Heart left ventricle (tissue), 16 donors: ENCODE measurements at regions of chr18 and their contacts with region 1.

Region 1: GRCh38 chr18:3869848-3870247 is 419.9 kb downstream of the TGIF1 start:
- DNase-seq: no peak
- ATAC-seq: peak in 3 of 4 donors; percentile 67 to 76 (median 70)
- H3K4me3 ChIP-seq: no peak overlapping the region
- H3K27ac ChIP-seq: no peak overlapping the region
- H3K4me1 ChIP-seq: peaks cover 0 to 17% (median 3%) of the 10 kb centered on the region in 12 donors
- H3K27me3 ChIP-seq: no peaks in the 10 kb centered on the region
- CTCF ChIP-seq: peak in 10 of 12 donors; percentile 15 to 60 (median 48)
- POLR2A ChIP-seq: no peak

Region 2: GRCh38 chr18:3771121-3771971 is 98.5 kb before region 1 on chr18:
- intact Hi-C with region 1: loop called in 9 of 10 experiments (anchors 2 to 5 kb)
- DNase-seq: peak; percentile 82 to 91 (median 84)
- ATAC-seq: peak; percentile 97 to 100 (median 100)
- H3K4me3 ChIP-seq: peak overlapping the region in 11 of 12 donors; percentile 1 to 53 (median 43)
- H3K27ac ChIP-seq: peak overlapping the region in 9 of 12 donors; percentile 18 to 70 (median 59)
- H3K4me1 ChIP-seq: peaks cover 0 to 9% (median 2%) of the 10 kb centered on the region in 12 donors
- H3K27me3 ChIP-seq: no peaks in the 10 kb centered on the region
- CTCF ChIP-seq: peak; percentile 93 to 99 (median 96)
- POLR2A ChIP-seq: no peak

Region 3: DNA sequence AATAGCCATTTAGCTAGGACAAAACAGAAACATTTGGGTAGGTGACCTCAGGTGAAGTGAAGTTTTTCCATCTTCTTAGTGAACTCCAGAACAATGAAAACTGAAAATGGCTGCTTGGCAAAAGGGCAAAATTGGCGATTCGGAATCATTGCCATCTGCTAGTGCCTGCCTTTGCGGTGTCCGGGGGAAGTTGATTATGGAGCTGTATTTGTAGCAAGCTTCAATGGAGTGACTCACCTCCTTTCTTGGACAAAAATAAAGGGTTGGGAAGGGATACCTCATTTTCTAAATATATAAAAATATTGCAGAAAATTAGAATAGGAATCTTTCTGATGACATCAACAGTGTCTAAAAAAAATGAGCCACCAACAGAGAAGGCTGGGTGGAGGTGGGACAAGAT is 40.7 kb after region 1 on chr18:
- intact Hi-C with region 1: no loop called
- DNase-seq: peak in 1 of 5 donors; percentile 38
- ATAC-seq: peak in 3 of 4 donors; percentile 56 to 74 (median 63)
- H3K4me3 ChIP-seq: no peak overlapping the region
- H3K27ac ChIP-seq: peak overlapping the region in 7 of 12 donors; percentile 28 to 71 (median 45)
- H3K4me1 ChIP-seq: peaks cover 0 to 38% (median 11%) of the 10 kb centered on the region in 12 donors
- H3K27me3 ChIP-seq: no peaks in the 10 kb centered on the region
- CTCF ChIP-seq: no peak
- POLR2A ChIP-seq: no peak

Region 4: GRCh38 chr18:3966985-3967856 is 97.4 kb after region 1 on chr18:
- intact Hi-C with region 1: loop called in 1 of 10 experiments (anchors 10 kb)
- DNase-seq: peak in 4 of 5 donors; percentile 51 to 58 (median 54)
- ATAC-seq: peak; percentile 92 to 97 (median 96)
- H3K4me3 ChIP-seq: no peak overlapping the region
- H3K27ac ChIP-seq: peak overlapping the region in 10 of 12 donors; percentile 7 to 85 (median 64)
- H3K4me1 ChIP-seq: peaks cover 0 to 15% (median 3%) of the 10 kb centered on the region in 12 donors
- H3K27me3 ChIP-seq: no peaks in the 10 kb centered on the region
- CTCF ChIP-seq: peak in 1 of 12 donors; percentile 13
- POLR2A ChIP-seq: no peak

Region 5: DNA sequence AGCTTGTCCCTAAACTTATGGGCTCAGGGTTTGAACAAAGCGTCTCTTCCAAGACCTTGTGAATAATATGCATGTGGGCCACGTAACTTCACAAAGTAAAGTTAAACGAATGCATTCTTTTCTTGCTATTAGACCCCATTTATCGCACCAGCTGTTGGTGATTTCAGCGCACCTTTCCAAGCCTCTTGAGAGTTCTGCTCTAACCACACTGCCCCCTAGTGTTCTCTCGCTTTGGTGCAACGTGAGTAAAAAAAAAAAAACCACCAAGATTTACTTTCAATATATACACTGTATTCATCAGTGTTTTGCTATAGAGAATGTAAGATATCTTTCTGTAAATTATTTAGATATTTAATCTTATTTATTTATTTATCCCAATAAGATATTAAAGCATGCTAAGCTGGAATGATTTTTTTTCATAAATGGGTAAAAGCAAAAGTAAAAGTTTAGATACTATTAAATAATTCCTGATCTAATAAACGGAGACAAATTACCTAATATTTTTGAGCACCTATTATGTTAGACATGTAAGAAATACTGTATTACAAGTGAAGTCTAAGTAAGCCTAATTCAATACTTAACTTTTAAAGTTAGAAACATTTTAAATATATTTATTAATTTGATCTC is 125.7 kb after region 1 on chr18:
- intact Hi-C with region 1: loop called in 6 of 10 experiments (anchors 5 to 10 kb)
- DNase-seq: peak in 4 of 5 donors; percentile 30 to 46 (median 38)
- ATAC-seq: peak in 3 of 4 donors; percentile 44 to 72 (median 64)
- H3K4me3 ChIP-seq: peak overlapping the region in 2 of 12 donors; percentile 8 to 11
- H3K27ac ChIP-seq: peak overlapping the region in 1 of 12 donors; percentile 84
- H3K4me1 ChIP-seq: peaks cover 0 to 18% (median 0%) of the 10 kb centered on the region in 12 donors
- H3K27me3 ChIP-seq: no peaks in the 10 kb centered on the region
- CTCF ChIP-seq: peak; percentile 80 to 93 (median 88)
- POLR2A ChIP-seq: no peak